ENCODE measurements at regions of chr2 and their contacts with region 1.

Region 1: DNA sequence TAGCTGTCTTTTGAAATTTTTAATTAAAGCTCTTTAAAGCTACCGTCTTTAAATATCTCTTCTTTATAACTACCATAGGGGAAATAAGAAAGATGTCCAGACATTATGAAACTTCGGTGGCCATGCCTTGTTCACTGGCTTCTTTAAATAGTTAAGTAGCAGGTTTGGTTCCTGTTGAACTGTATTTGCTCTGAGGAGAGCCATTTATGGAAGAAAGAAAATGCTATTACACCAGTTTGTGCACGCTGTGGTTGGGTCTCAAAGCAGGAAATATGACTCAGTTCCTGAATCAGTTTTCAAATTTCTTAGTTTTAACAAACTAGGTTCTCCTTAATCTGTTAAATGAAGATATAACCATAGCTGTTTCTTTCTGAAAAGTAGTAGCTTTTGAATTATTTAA is 12.2 kb downstream of the ARPC2 start:
- DNase-seq: no peak
- H3K4me3 ChIP-seq: no peak overlapping the region
- H3K27ac ChIP-seq: no peak overlapping the region
- H3K4me1 ChIP-seq: no peaks in the 10 kb centered on the region
- H3K27me3 ChIP-seq: no peaks in the 10 kb centered on the region
- CTCF ChIP-seq: no peak
- EP300 ChIP-seq: no peak
- POLR2A ChIP-seq: no peak
- RAD21 ChIP-seq: no peak

Region 2: GRCh38 chr2:218125626-218126080 is 103.6 kb before region 1 on chr2 and contains the start of gene CXCR2:
- CTCF ChIA-PET with region 1: no interaction called
- POLR2A ChIA-PET with region 1: no interaction called
- DNase-seq: no peak
- H3K4me3 ChIP-seq: no peak within 1 kb of the TSS
- H3K27ac ChIP-seq: no peak within 1 kb of the TSS
- H3K4me1 ChIP-seq: peaks cover 0 to 13% (median 6%) of the 10 kb centered on the region in 4 experiments; a peak in 2 of 7 replicates
- H3K27me3 ChIP-seq: 0 out of 7 replicates have a peak, but pooled peaks cover 0 to 2% (median 0%) of the 10 kb centered on the region in 4 experiments
- CTCF ChIP-seq: peak in 2 of 3 experiments; percentile 7 to 8; a peak in 2 of 4 replicates
- EP300 ChIP-seq: no peak
- POLR2A ChIP-seq: no peak
- RAD21 ChIP-seq: no peak
- total RNA-seq, gene CXCR2: 0.63 and 1.6 TPM in 2 replicates

Region 3: GRCh38 chr2:218179782-218180181 is 49.5 kb before region 1 on chr2:
- CTCF ChIA-PET with region 1: no interaction called
- POLR2A ChIA-PET with region 1: no interaction called
- DNase-seq: no peak
- H3K4me3 ChIP-seq: no peak overlapping the region
- H3K27ac ChIP-seq: no peak overlapping the region
- H3K4me1 ChIP-seq: no peaks in the 10 kb centered on the region
- H3K27me3 ChIP-seq: no peaks in the 10 kb centered on the region
- CTCF ChIP-seq: no peak
- EP300 ChIP-seq: no peak
- POLR2A ChIP-seq: no peak
- RAD21 ChIP-seq: no peak

Region 4: DNA sequence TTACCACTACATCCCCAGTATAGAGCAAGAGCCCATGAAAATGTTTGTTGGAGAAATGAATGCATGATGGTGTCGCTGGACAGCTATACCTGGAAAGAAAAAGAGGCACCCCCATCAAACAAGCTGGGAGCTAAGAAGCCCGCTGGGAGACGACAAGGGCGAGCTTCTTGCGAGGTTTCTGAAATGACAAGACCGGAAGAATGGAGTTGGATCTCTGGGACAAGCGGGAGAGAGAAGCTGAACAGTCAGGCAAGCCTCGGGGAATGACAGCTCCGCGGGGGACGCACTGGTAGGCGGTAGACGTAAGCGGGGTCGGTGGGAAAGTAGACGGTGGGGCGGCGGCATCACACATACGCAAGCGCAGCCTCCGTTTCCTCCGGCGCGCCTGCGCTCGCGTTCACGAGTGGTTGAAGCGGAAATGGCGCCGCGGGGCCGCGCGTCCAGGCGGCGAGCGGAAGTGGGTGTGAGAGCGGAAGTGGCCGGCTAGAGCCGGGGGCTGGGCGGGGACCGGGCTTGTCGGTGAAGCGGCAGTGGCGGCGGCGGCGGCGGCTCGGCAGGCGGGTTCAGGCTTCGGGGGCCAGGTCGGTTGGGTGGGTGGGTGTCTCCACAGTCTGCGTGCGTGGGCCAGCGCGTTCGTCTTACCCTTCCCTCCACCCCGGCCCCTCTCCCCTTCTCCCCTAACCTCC is 12.4 kb before region 1 on chr2 and contains the start of gene ARPC2:
- CTCF ChIA-PET with region 1: interaction called, 14 read pairs
- POLR2A ChIA-PET with region 1: interaction called, 4 read pairs
- DNase-seq: peak; percentile 68 to 91
- H3K4me3 ChIP-seq: peak within 1 kb of the TSS; percentile 87 to 95 (median 92)
- H3K27ac ChIP-seq: peak within 1 kb of the TSS; percentile 69
- H3K4me1 ChIP-seq: peaks cover 0 to 10% (median 3%) of the 10 kb centered on the region in 4 experiments; a peak in 3 of 7 replicates
- H3K27me3 ChIP-seq: no peaks in the 10 kb centered on the region
- CTCF ChIP-seq: no peak
- EP300 ChIP-seq: no peak
- POLR2A ChIP-seq: peak in 1 of 2 experiments; percentile 79; a peak in 2 of 3 replicates
- RAD21 ChIP-seq: no peak
- total RNA-seq, gene ARPC2: 195 and 198 TPM in 2 replicates

Region 5: DNA sequence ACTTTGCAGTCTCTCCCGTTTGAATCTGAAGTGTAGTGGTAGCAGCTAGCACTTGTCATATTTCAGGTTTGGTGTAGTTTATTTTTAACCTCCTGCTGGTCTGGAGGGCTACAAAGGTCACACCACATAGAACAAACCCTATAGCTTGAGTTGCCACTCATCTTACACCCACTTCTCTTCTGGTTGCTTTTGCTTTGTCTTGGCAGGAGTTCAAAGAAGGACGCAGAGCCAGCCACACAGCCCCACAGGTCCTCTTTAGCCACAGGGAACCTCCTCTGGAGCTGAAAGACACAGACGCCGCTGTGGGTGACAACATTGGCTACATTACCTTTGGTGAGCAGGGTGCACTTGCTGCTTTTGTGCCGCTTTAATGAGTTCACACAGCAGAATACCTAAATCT is 16.0 kb after region 1 on chr2:
- CTCF ChIA-PET with region 1: interaction called, 25 read pairs
- POLR2A ChIA-PET with region 1: interaction called, 6 read pairs
- DNase-seq: no peak
- H3K4me3 ChIP-seq: no peak overlapping the region
- H3K27ac ChIP-seq: no peak overlapping the region
- H3K4me1 ChIP-seq: no peaks in the 10 kb centered on the region
- H3K27me3 ChIP-seq: no peaks in the 10 kb centered on the region
- CTCF ChIP-seq: no peak
- EP300 ChIP-seq: no peak
- POLR2A ChIP-seq: no peak
- RAD21 ChIP-seq: no peak

Region 6: GRCh38 chr2:218257390-218257981 is 28.2 kb after region 1 on chr2:
- CTCF ChIA-PET with region 1: interaction called, 22 read pairs
- POLR2A ChIA-PET with region 1: interaction called, 6 read pairs
- DNase-seq: peak in 1 of 2 experiments; percentile 94
- H3K4me3 ChIP-seq: no peak overlapping the region
- H3K27ac ChIP-seq: no peak overlapping the region
- H3K4me1 ChIP-seq: peaks cover 3 to 21% (median 15%) of the 10 kb centered on the region in 4 experiments
- H3K27me3 ChIP-seq: no peaks in the 10 kb centered on the region
- CTCF ChIP-seq: peak in 2 of 3 experiments; percentile 76; a peak in 3 of 4 replicates
- EP300 ChIP-seq: no peak
- POLR2A ChIP-seq: no peak
- RAD21 ChIP-seq: peak; percentile 51 to 60

Measured in H1 (cell line).